CD14-positive monocyte (primary cell): ENCODE measurements at regions of chr5 and their contacts with region 1.

Region 1: DNA sequence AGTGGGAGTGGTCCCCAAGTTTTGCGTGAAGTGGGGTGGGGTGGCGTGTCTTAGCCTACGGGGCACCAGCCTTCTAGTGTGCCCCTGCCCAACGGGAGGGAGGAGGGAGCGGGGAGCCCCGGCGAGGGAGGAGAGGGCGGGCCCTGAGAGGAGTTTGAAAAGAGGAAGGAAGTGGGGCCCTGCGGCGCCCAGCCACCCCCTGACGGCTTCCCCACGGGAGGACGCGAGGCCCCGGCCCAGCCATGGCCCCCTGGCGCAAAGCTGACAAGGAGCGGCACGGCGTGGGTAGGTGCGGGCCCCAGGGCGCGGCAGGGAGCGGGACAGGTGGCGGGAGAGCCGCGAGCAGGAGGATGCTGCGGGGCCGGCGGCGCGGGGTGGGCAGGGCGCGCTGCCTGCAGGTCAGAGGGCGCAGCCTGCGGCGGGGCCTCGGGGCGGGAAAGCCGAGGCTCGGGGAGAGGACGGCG is at the start of gene DOCK2:
- DNase-seq: peak; percentile 81 to 82 (median 82)
- H3K4me3 ChIP-seq: peak within 1 kb of the TSS; percentile 48 to 97 (median 89)
- H3K4me3 Mint-ChIP-seq: peak within 1 kb of the TSS; percentile 88 to 94
- H3K27ac ChIP-seq: peak within 1 kb of the TSS; percentile 97
- H3K27ac Mint-ChIP-seq: peak within 1 kb of the TSS; percentile 94 to 99 (median 96)
- H3K4me1 ChIP-seq: peaks cover 55 to 59% of the 10 kb centered on the region in 2 donors
- H3K4me1 Mint-ChIP-seq: peaks cover 55% of the 10 kb centered on the region
- H3K27me3 ChIP-seq: no peaks in the 10 kb centered on the region
- H3K27me3 Mint-ChIP-seq: peaks cover 0 to 2% (median 0%) of the 10 kb centered on the region in 3 donors
- CTCF ChIP-seq: no peak
- polyA plus RNA-seq, gene DOCK2: 57.5 to 178 (median 115) TPM

Region 2: GRCh38 chr5:169656125-169656901 is 19.2 kb after region 1 on chr5:
- intact Hi-C with region 1: loop called in 1 of 2 experiments (anchors 2 kb)
- DNase-seq: peak; percentile 80 to 89 (median 80)
- H3K4me3 ChIP-seq: no peak overlapping the region
- H3K4me3 Mint-ChIP-seq: no peak overlapping the region
- H3K27ac ChIP-seq: peak overlapping the region; percentile 82 to 93
- H3K27ac Mint-ChIP-seq: peak overlapping the region; percentile 86 to 97 (median 93)
- H3K4me1 ChIP-seq: peaks cover 50 to 55% of the 10 kb centered on the region in 2 donors
- H3K4me1 Mint-ChIP-seq: peaks cover 54% of the 10 kb centered on the region
- H3K27me3 ChIP-seq: no peaks in the 10 kb centered on the region
- H3K27me3 Mint-ChIP-seq: no peaks in the 10 kb centered on the region
- CTCF ChIP-seq: no peak

Region 3: GRCh38 chr5:169670769-169671525 is 33.8 kb after region 1 on chr5:
- intact Hi-C with region 1: loop called in 1 of 2 experiments (anchors 5 kb)
- DNase-seq: no peak
- H3K4me3 ChIP-seq: no peak overlapping the region
- H3K4me3 Mint-ChIP-seq: no peak overlapping the region
- H3K27ac ChIP-seq: peak overlapping the region in 1 of 2 donors; percentile 0
- H3K27ac Mint-ChIP-seq: peak overlapping the region in 5 of 7 donors; percentile 3 to 73 (median 17)
- H3K4me1 ChIP-seq: no peaks in the 10 kb centered on the region
- H3K4me1 Mint-ChIP-seq: peaks cover 6% of the 10 kb centered on the region
- H3K27me3 ChIP-seq: no peaks in the 10 kb centered on the region
- H3K27me3 Mint-ChIP-seq: no peaks in the 10 kb centered on the region
- CTCF ChIP-seq: no peak

Region 4: DNA sequence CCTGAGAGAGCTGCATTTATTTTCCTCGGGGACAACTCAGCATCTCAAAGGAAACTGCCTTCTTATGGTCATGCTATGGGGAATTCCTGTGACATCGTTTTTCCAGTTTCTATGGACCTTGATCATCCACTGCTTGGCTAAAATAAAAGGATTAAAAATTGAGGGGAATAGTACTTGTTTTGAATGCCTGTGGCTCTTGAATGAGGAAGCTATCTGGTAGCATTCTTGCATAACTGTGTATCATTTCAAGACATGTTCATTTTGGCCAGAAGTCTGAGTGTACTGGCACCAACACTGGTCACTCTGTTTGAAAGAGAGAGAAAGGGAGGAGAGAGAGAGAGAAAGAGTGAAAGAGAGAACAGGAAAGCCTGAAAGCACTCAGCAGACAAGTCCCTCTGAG is 116.7 kb after region 1 on chr5:
- intact Hi-C with region 1: no loop called
- DNase-seq: peak; percentile 9 to 23 (median 11)
- H3K4me3 ChIP-seq: no peak overlapping the region
- H3K4me3 Mint-ChIP-seq: no peak overlapping the region
- H3K27ac ChIP-seq: peak overlapping the region in 1 of 2 donors; percentile 59
- H3K27ac Mint-ChIP-seq: peak overlapping the region in 4 of 7 donors; percentile 47 to 48 (median 48)
- H3K4me1 ChIP-seq: peaks cover 7 to 9% of the 10 kb centered on the region in 2 donors
- H3K4me1 Mint-ChIP-seq: peaks cover 11% of the 10 kb centered on the region
- H3K27me3 ChIP-seq: no peaks in the 10 kb centered on the region
- H3K27me3 Mint-ChIP-seq: no peaks in the 10 kb centered on the region
- CTCF ChIP-seq: no peak